PC-9 (cell line): ENCODE measurements at regions of chr19 and their contacts with region 1.

Region 1: GRCh38 chr19:36009220-36009619 is 607 bp upstream of the SYNE4 start:
- DNase-seq: peak in 1 of 2 experiments; percentile 65
- H3K4me3 ChIP-seq: peak overlapping the region; percentile 59; the same call in 1 of the 2 replicates
- H3K27ac ChIP-seq: no peak overlapping the region
- H3K4me1 ChIP-seq: no peaks in the 10 kb centered on the region
- H3K27me3 ChIP-seq: no peaks in the 10 kb centered on the region
- CTCF ChIP-seq: no peak

Region 2: GRCh38 chr19:35868172-35868822 is 140.9 kb before region 1 on chr19 and contains the start of gene APLP1:
- CTCF ChIA-PET with region 1: no interaction called
- POLR2A ChIA-PET with region 1: interaction called, 15 read pairs
- intact Hi-C with region 1: no loop called
- DNase-seq: peak in 1 of 2 experiments; percentile 69
- H3K4me3 ChIP-seq: peak within 1 kb of the TSS; percentile 35; the same call in 1 of the 2 replicates
- H3K27ac ChIP-seq: no peak within 1 kb of the TSS
- H3K4me1 ChIP-seq: no peaks in the 10 kb centered on the region
- H3K27me3 ChIP-seq: peaks cover 61% of the 10 kb centered on the region
- CTCF ChIP-seq: no peak
- total RNA-seq, gene APLP1: 2.0 and 2.1 TPM in 2 replicates

Region 3: DNA sequence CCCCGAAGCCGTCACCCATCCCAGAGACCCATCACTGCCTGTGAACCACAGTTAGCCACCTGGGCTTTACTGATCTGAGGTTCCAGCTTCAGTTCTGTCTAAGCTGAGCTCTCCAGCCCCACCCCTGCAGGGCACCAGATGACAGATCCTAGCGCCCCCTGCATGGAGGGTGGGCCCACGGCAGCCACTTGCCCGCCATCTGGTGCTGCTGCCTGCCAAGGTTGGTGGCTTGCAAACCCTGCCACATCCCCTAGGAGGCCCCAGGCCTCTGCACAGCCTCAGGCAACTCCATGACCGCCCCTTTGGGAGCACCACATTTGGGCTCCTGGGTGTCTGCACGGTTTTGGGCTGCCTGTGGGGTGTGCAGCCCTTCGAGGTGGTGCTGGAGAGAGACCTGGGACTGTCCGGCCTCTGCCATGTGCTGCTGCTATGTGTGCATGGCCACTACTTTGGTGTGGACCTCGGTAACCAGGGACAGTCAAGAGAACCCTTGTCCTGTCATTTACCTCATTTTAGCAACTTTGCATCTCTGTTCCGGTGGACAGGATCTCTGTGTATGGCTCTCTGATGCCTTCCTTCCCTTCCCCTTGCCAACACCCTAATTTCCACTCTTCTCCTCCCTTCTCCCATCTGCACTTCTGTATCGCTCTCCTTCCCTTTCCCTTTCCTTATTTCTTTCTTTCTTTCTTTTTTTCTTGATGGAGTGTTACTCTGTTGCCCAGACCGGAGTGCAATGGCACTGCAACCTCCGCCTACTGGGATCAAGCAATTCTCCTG is 31.6 kb before region 1 on chr19:
- CTCF ChIA-PET with region 1: no interaction called
- POLR2A ChIA-PET with region 1: no interaction called
- intact Hi-C with region 1: no loop called
- DNase-seq: no peak
- H3K4me3 ChIP-seq: no peak overlapping the region
- H3K27ac ChIP-seq: no peak overlapping the region
- H3K4me1 ChIP-seq: no peaks in the 10 kb centered on the region
- H3K27me3 ChIP-seq: peaks cover 87% of the 10 kb centered on the region
- CTCF ChIP-seq: no peak; the same call in 1 of the 2 replicates

Region 4: GRCh38 chr19:37334179-37335071 is 1325.2 kb after region 1 on chr19:
- CTCF ChIA-PET with region 1: no interaction called
- POLR2A ChIA-PET with region 1: interaction called, 13 read pairs
- intact Hi-C with region 1: no loop called
- DNase-seq: peak; percentile 67 to 68
- H3K4me3 ChIP-seq: peak overlapping the region; percentile 76
- H3K27ac ChIP-seq: no peak overlapping the region
- H3K4me1 ChIP-seq: no peaks in the 10 kb centered on the region
- H3K27me3 ChIP-seq: no peaks in the 10 kb centered on the region
- CTCF ChIP-seq: no peak